Common myeloid progenitor, CD34-positive (primary cell): ENCODE measurements at regions of chr11 and their contacts with region 1.

Region 1: DNA sequence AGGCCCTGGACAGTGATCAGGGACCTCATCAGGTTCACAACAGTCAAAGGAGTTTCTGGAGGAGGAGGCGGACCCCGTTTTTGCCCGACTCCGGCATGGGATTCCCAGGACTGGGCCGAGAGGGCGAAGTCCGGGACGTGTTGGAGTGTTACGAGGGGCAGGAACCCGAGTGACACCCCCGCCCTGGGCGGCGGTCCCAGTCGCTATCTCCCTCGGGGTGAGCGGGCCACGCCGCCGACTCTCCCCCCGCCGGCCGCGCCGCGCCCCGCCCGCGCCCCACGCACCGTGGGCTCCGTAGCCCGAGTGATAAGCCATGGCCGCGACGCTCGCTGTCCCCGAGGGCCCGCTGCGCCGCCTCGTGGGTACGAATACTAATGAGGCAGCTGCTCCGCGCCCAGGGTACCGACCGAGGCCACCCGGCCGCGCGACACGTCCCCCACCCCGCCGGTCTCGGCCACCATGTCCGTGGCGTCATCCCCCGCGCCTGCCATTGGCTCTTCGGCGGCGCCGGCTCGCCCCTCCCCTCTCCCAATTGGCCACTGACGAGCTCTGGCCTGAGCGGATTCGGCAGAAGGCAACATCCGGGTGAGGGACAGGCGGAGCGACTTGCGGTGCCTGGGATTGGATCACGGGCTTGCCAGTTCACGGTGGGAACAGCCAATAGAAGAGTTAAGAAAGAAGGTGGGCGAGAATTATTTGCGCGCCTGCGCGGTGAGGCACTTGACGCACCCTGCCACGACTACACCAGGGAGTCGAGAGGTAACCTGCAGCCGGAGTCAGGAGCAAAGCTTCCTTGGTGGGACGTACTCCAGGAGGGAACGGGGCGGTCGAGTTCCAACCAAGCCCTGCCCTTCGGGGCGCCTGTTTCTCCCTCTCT is at the start of gene YIF1A:
- DNase-seq: peak; percentile 99 to 100 (median 99)
- H3K4me3 ChIP-seq: peak within 1 kb of the TSS; percentile 64 to 93 (median 80)
- H3K27ac ChIP-seq: peak within 1 kb of the TSS; percentile 33 to 83
- H3K4me1 ChIP-seq: peaks cover 0 to 37% (median 32%) of the 10 kb centered on the region in 4 experiments
- H3K27me3 ChIP-seq: peaks cover 0 to 39% (median 17%) of the 10 kb centered on the region in 5 experiments

Region 2: GRCh38 chr11:66247304-66247703 is 41.6 kb before region 1 on chr11:
- CTCF ChIA-PET with region 1: no interaction called
- POLR2A ChIA-PET with region 1: no interaction called
- DNase-seq: no peak
- H3K4me3 ChIP-seq: no peak overlapping the region
- H3K27ac ChIP-seq: no peak overlapping the region
- H3K4me1 ChIP-seq: no peaks in the 10 kb centered on the region
- H3K27me3 ChIP-seq: no peaks in the 10 kb centered on the region

Region 3: DNA sequence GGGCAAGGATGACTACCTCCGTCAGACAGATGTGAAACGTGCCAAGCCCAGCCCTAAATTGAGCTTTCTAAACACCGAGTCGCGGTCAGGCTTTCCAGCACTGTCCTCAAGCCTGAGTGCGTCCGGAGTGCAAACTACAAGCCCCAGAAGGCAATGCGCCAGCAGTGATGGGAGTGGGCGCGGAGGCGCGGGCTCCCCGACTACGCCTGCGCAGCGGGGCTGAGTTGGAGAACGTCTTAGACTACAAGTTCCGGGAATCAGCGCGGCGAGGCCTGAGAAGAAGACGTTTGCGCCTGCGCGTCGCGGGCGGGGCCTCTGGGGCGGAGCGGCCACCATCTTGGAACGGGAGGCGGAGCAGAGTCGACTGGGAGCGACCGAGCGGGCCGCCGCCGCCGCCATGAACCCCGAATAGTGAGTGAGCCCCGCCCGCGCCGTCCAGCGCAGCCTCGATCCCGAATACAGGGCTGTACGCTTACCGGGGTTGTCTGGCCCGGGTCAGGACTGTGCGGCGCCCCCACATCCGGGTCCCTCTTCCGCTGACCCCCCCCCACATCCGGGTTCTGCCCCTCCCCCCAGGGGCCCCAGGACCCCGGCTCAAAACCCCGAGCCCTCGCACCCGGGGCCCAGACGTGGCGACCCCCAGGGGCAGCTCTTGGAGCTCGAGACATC is 20.5 kb before region 1 on chr11 and contains the start of gene RAB1B:
- CTCF ChIA-PET with region 1: interaction called, 17 read pairs
- POLR2A ChIA-PET with region 1: no interaction called
- DNase-seq: peak; percentile 99
- H3K4me3 ChIP-seq: peak within 1 kb of the TSS; percentile 74 to 96 (median 89)
- H3K27ac ChIP-seq: peak within 1 kb of the TSS; percentile 64 to 88
- H3K4me1 ChIP-seq: peaks cover 5 to 29% (median 26%) of the 10 kb centered on the region in 4 experiments
- H3K27me3 ChIP-seq: no peaks in the 10 kb centered on the region